Mammary epithelial cell (primary cell): ENCODE measurements at regions of chr11 and their contacts with region 1.

Region 1: DNA sequence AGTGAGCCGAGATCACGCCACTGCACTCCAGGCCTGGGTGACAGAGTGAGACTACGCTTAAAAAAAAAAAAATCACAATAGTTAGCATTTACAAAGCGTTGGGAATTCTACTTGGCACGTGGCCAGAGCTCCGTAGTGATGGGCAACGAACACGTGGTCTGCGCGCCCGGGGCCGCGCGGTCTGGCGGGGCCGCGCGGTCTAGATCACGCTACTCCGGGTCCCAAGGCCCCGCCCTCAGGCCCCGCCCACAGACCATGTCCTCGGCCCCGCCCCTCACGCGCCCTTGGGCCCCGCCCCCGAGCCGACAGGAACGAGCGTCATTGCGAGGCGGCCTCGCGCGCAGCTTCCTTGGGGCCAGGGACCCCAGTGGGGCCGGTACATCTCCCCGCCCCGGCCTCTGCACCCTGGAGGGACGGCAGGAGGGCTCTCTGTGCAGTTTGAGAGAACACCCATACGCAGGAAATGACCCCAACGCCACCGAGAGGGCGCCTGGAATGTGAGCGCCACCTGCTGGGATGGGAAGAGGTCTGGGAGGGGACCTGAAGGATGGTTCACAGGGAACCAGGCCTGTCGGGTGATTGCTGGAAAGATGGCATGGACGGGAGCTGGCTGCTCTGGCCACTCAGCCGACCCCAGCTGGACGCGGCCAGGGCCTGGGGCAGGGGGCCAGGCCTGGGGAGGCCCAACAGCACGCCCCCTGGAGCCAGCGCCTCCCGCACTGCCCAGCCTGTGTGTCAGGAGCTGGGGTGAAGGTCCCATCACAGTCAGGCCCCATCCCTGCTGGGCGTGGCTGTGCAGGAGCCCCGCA is 2.0 kb upstream of the PTDSS2 start:
- DNase-seq: peak; percentile 81
- H3K4me3 ChIP-seq: peak overlapping the region; percentile 59 to 92 (median 91)
- H3K27ac ChIP-seq: peak overlapping the region; percentile 68
- H3K4me1 ChIP-seq: peaks cover 39% of the 10 kb centered on the region
- H3K27me3 ChIP-seq: no peaks in the 10 kb centered on the region
- CTCF ChIP-seq: peak; percentile 83 to 98

Region 2: GRCh38 chr11:207208-207862 is 240.8 kb before region 1 on chr11 and contains the starts of genes BET1L and RIC8A:
- CTCF ChIA-PET with region 1: no interaction called
- dilution Hi-C with region 1: loop called (anchors 10 kb)
- in situ Hi-C with region 1: no loop called
- intact Hi-C with region 1: loop called (anchors 5 kb)
- DNase-seq: peak; percentile 98
- H3K4me3 ChIP-seq: peak within 1 kb of the TSS; percentile 68 to 92 (median 74)
- H3K27ac ChIP-seq: peak within 1 kb of the TSS; percentile 90
- H3K4me1 ChIP-seq: peaks cover 22% of the 10 kb centered on the region
- H3K27me3 ChIP-seq: no peaks in the 10 kb centered on the region
- CTCF ChIP-seq: no peak
- total RNA-seq, gene BET1L: 13.5 to 53.8 TPM
- total RNA-seq, gene RIC8A: 112 to 132 TPM

Region 3: DNA sequence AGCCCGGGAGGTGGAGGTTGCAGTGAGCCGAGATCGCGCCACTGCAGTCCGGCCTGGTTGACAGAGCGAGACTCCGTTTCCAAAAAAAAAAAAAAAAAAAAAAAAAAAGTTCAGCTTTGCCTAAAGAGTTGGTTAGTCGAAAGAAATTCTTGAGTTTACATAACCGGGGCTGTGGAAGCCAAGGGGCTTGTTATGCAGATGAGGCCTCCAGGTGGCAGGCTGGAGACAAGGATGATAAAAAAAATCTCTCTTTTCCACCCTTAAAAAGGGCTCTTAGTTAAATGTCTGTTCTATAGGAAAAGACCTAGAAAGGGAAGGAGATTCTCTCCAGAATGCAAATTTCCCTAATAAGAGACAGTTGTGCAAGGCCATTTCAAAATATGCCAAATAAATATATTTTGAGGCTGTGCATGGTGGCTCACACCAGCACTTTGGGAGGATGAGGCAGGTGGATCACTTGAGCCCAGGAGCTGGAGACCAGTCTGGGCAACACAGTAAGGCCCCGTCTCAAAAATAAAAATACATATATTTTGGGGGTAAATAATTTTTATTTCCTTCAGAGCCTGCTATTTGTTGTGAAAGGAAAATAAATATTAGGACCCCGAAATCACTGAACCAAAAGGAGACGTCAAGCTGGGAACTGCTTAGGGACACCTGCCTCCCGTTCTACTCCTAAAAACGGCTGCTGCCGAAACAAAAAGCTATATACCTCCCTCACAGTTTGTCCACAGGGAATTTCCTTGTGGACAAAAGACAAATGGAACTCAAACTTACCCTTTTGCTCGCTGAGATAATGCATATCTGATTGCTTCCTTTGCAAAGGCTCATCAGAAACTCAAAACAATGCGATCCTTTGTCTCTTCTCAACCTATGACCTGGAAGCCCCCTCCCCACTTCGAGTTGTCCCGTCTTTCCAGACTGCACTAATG is 142.9 kb before region 1 on chr11:
- CTCF ChIA-PET with region 1: no interaction called
- dilution Hi-C with region 1: no loop called
- in situ Hi-C with region 1: no loop called
- intact Hi-C with region 1: loop called (anchors 1 kb)
- DNase-seq: peak; percentile 25
- H3K4me3 ChIP-seq: no peak overlapping the region
- H3K27ac ChIP-seq: no peak overlapping the region
- H3K4me1 ChIP-seq: peaks cover 8% of the 10 kb centered on the region
- H3K27me3 ChIP-seq: no peaks in the 10 kb centered on the region
- CTCF ChIP-seq: peak; percentile 70 to 71

Region 4: GRCh38 chr11:394034-394857 is 53.9 kb before region 1 on chr11 and contains the start of gene PKP3:
- CTCF ChIA-PET with region 1: no interaction called
- dilution Hi-C with region 1: loop called (anchors 5 kb)
- in situ Hi-C with region 1: no loop called
- intact Hi-C with region 1: loop called (anchors 1 kb)
- DNase-seq: peak; percentile 97
- H3K4me3 ChIP-seq: peak within 1 kb of the TSS; percentile 51 to 75 (median 71)
- H3K27ac ChIP-seq: peak within 1 kb of the TSS; percentile 85
- H3K4me1 ChIP-seq: peaks cover 36% of the 10 kb centered on the region
- H3K27me3 ChIP-seq: no peaks in the 10 kb centered on the region
- CTCF ChIP-seq: no peak
- total RNA-seq, gene PKP3: 248 to 274 TPM

Region 5: DNA sequence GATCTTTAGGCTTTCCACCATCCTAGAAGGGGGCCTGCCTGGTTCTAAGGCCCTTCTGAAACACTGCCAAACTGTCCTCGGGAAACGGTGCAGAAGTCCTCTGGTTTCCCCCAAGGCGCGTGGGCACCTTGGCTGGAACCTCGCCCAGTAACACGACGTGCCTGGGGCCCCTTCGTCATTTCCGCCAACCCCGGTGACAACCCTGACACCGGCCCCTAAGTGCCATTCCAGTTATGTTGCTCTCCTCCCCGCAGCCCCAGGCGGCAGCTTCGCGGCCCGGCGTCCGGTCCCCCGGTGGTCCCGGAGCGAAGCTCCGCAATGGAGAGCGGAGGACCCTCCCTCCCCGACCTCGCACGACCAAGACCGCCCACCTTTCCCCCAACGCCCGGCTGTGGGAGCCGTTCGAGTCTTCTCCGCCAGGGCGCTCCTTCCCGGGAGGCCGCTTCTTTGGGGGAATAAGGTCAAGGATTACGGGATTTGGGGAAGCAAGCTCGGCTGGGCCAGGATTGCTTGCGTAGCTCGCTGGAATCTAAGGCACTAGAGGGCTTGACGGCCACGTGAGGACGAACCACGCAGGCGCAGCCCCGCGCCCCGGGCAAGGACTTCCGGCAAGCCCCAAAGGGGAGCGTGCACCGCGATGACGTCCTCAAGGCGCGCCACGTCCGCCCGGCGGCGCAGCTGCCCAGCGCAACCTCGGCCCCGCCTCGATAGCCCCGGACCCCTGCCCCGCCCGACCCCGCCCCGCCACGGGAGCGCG is 58.3 kb after region 1 on chr11:
- CTCF ChIA-PET with region 1: interaction called, 7 read pairs
- dilution Hi-C with region 1: no loop called
- in situ Hi-C with region 1: loop called in 1 of 2 experiments (anchors 5 kb)
- intact Hi-C with region 1: loop called (anchors 1 kb)
- DNase-seq: peak; percentile 96
- H3K4me3 ChIP-seq: peak overlapping the region; percentile 84 to 96 (median 92)
- H3K27ac ChIP-seq: peak overlapping the region; percentile 97
- H3K4me1 ChIP-seq: peaks cover 35% of the 10 kb centered on the region
- H3K27me3 ChIP-seq: no peaks in the 10 kb centered on the region
- CTCF ChIP-seq: no peak

Region 6: GRCh38 chr11:560305-561147 is 112.4 kb after region 1 on chr11 and contains the starts of genes LMNTD2 and RASSF7:
- CTCF ChIA-PET with region 1: no interaction called
- dilution Hi-C with region 1: no loop called
- in situ Hi-C with region 1: no loop called
- intact Hi-C with region 1: no loop called
- DNase-seq: peak; percentile 85
- H3K4me3 ChIP-seq: peak within 1 kb of the TSS; percentile 55 to 80 (median 80)
- H3K27ac ChIP-seq: peak within 1 kb of the TSS; percentile 62
- H3K4me1 ChIP-seq: peaks cover 32% of the 10 kb centered on the region
- H3K27me3 ChIP-seq: peaks cover 5% of the 10 kb centered on the region
- CTCF ChIP-seq: no peak
- total RNA-seq, gene LMNTD2: 2.3 to 7.6 TPM
- total RNA-seq, gene RASSF7: 33.3 to 36.1 TPM

Region 7: DNA sequence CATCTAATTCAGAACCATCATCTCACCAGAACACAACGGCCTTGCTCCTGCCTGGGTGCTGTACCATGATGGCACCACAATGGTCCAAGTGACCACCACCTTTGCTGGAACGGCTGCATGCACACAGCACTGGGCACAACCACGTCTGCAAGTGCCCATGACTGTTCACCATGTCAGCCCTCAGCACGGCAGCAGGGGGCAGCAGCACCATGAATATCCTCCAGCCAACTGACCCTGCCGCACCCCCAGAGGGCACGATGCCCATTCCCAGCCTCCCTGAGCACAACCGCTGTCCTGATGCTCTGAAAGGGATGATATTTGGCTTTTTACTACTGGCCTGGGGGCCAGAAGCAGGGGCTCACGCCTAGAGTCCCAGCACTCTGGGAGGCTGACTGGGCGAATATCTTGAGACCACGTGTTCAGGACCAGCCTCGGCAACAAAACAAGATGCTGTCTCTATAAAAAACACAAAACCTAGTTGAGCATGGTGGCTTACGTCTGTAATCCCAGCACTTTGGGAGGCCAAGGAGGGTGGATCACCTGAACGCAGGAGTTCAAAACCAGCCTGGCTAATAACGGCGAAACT is 214.7 kb after region 1 on chr11:
- CTCF ChIA-PET with region 1: no interaction called
- dilution Hi-C with region 1: loop called (anchors 5 kb)
- in situ Hi-C with region 1: no loop called
- intact Hi-C with region 1: no loop called
- DNase-seq: peak; percentile 35
- H3K4me3 ChIP-seq: no peak overlapping the region
- H3K27ac ChIP-seq: no peak overlapping the region
- H3K4me1 ChIP-seq: peaks cover 16% of the 10 kb centered on the region
- H3K27me3 ChIP-seq: no peaks in the 10 kb centered on the region
- CTCF ChIP-seq: peak; percentile 74 to 78